HEK293T (cell line): ENCODE measurements at regions of chr17 and their contacts with region 1.

Region 1: GRCh38 chr17:16285957-16286640 is 67.2 kb downstream of the CENPV start:
- DNase-seq: peak; percentile 53

Region 2: GRCh38 chr17:16232391-16232790 is 53.7 kb before region 1 on chr17:
- CTCF ChIA-PET with region 1: interaction called, 21 read pairs
- POLR2A ChIA-PET with region 1: interaction called, 3 read pairs
- DNase-seq: no peak

Region 3: DNA sequence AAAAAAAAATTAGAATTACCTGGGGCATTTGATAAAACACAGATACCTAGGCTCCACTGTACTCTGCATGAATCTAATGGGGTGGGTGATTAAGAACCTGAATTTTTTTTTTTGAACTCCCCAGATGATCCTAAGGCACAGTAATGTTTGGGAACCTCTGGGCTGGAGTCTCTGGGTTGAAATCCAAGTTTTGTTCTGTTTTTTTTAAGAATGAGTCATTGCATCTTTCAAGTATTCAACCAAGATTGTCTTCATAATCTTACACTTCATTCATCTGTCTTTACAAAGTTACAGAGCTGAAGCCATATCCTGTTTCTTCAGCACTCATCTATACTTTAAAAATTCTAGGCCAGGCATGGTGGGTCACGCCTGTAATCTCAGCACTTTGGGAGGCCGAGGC is 16.4 kb before region 1 on chr17:
- CTCF ChIA-PET with region 1: interaction called, 24 read pairs
- POLR2A ChIA-PET with region 1: interaction called, 5 read pairs
- DNase-seq: no peak

Region 4: DNA sequence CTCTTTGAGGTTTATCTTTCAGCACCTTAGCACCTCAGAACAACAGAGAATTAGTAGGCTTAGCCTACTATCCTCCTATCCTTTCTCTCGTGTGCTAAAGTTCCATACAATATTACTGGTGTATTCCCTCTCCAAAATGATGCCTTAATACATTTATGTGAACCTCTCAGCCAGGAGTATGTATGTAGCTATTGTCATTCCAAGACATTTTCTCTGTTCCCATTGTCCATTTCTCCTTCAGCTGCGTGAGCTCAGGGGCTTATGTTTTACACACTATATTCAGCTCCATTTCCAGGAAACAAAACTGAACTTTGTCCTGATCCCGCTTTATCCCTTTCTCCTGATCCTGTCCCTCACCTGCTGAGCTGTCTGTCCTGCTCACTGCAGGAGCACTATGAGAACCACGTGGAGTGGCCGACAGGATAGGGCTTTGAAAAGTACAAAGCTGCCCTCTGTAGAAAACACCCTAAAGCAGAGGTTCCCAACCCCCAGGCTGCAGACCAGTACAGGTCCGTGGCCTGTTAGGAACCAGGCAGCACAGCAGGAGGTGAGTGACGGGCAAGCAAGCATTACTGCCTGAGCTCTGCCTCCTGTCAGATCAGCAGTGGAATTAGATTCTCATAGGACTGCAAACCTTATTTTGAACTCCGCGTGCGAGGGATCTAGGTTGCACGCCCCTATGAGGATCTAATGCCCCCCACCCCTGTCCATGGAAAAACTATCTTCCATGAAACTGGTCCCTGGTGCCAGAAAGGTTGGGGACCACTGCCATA is 11.5 kb after region 1 on chr17:
- CTCF ChIA-PET with region 1: interaction called, 56 read pairs
- POLR2A ChIA-PET with region 1: interaction called, 13 read pairs
- DNase-seq: no peak

Region 5: DNA sequence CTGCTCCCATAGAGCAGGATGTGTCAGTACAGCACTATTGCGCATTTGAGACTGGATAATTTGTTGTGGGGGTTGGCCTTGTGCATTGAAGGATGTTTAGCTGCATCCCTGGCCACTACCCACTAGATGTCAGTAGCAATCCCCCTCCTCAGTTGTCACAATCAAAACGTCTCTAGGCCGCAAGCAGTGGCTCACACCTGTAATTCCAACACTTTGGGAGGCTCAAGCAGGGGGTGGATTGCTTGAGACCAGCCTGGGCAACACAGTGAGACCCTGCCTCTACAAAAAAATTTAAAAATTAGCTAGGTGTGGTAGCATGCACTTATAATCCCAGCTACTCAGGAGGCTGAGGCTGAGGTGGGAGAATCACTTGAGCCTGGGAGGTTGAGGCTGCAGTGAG is 18.7 kb after region 1 on chr17:
- CTCF ChIA-PET with region 1: interaction called, 24 read pairs
- POLR2A ChIA-PET with region 1: interaction called, 13 read pairs
- DNase-seq: peak; percentile 39

Region 6: DNA sequence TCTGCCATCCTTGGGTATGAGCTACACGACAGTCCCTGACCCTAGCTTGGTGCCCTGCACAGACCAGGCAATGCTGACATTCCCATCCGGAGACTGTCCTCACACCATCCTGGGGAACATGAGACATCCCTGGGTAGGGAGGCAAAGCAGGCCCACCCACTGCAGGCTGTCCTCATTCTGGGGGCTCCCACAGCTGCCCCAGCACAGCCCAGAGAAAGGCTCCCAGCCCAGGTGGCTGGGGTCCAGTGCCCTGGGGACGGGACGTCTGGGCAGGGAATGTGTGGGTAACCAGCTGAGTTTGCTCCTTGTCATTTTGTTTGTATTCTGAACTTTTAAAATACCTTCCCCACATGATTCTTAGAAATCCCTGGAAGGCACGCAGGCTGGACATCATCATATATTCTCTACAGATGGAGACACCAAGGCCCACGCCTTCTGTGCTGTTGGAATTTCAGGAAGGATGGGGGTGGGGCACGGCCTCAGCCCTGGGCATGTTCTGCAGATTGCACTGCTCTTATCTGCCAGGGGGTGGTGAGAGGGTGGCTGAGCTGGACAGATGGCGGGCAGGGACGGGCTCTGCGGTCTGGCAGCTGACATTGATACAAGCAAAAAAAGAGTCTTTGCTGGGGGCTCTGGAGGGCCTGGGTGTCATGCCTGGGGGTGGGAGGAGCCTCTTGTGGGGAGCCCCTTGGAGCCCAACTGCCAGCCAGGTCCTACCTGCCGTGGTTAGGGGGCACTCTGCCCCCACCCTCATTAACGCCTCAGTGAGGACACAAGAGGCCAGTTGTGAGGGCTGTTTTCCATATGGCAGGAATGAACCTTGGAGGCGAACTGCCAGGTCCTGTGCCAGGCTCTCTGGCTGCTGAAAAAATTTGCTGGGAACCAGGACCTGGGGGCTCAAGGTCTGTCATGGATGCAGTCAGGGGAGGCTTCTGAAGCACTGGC is 177.5 kb after region 1 on chr17:
- CTCF ChIA-PET with region 1: no interaction called
- POLR2A ChIA-PET with region 1: no interaction called
- DNase-seq: no peak